ENCODE measurements at regions of chr7 and their contacts with region 1.

Region 1: DNA sequence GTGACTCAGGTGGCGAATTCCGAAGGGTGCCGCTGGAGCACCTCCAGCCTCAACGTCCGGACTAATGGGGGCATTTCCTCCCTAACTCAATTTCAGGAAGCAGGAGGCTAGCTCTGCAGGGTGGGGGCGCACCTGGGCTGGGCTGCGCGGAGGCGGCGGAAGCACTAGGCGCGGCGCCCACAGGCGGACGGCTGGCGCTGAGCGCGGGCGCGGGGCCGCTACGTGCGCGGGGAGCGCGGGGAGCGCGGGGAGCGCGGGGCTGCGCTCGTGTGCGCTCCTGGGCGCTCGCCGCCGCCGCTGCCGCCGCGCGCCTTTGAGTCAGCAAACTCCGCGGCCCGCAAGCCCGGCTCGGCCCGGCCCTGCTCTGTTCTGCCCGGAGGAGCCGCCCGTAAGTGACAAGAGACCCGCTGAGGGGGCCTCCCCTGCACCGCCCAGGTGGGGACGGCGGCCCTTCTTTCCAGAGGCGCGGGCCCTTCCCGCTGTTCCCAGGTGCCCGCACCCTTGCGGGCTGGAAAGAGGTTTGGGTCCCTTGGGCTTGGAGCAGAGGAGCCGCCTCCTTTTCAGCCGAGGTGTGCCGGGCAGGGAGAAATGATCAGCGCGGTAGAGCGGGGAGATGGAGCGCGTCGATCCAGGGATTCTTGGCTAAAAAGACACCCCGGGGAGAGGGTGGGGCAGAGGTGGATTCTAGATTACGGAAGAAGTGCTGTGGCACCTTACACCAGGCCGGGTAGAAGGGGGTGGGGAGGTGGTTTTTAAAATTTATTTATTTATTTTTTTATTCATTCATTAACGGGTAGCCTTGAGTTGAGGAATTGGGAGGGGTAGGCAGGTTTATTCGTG is at the start of gene SNX10:
- DNase-seq: peak; percentile 76
- ATAC-seq: peak; percentile 77
- H3K4me3 Mint-ChIP-seq: peak within 1 kb of the TSS; percentile 92
- H3K27ac Mint-ChIP-seq: peak within 1 kb of the TSS; percentile 95
- H3K4me1 Mint-ChIP-seq: peaks cover 51% of the 10 kb centered on the region
- H3K27me3 Mint-ChIP-seq: no peaks in the 10 kb centered on the region
- CTCF ChIP-seq: no peak
- total RNA-seq, gene SNX10: 28.9 and 32.3 TPM in 2 replicates

Region 2: GRCh38 chr7:25707768-25708620 is 583.9 kb before region 1 on chr7:
- CTCF ChIA-PET with region 1: no interaction called
- POLR2A ChIA-PET with region 1: no interaction called
- intact Hi-C with region 1: no loop called
- DNase-seq: no peak
- ATAC-seq: no peak
- H3K4me3 Mint-ChIP-seq: no peak overlapping the region
- H3K27ac Mint-ChIP-seq: no peak overlapping the region
- H3K4me1 Mint-ChIP-seq: no peaks in the 10 kb centered on the region
- H3K27me3 Mint-ChIP-seq: peaks cover 15% of the 10 kb centered on the region
- CTCF ChIP-seq: no peak

Region 3: DNA sequence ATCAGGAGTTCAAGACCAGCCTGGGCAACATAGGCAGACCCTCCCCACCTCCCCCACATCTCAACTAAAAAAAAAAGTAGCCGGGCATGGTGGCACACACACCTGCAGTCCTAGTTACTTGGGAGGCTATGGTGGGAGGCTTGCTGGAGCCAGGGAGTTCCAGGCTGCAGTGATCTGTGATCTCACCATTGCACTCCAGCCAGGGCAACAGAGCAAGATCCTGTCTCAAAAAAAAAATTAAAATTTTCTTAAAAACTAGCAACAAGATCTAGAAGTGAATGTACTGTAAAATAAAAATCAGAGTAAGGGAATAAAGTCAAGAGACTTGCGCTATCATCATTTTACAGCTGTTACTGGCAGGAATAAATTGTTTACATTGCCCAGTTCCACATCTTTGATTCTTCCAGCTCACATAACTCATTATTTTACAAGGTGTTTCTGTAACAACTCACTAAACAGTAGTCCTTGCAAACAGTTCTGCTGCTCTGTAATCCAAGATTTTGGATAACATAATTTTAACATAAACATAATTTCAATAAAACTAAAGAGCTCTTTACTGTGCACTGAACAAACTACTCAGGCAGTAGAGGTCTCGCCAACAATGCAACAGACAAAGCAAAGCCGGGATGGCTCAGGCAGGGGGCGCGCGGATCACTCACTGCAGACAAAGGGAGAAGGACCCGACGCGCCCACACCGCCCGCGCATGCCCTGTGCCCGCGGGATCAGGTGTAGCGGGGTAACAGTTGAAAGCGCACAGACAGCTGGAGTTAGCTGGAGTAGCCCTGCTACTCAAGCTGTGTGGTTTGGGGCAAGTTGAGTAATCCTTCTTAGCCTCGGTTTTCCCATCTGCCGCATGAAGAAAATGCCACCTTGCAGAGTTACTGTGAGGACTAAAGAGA is 213.2 kb before region 1 on chr7:
- CTCF ChIA-PET with region 1: interaction called, 4 read pairs
- POLR2A ChIA-PET with region 1: interaction called, 3 read pairs
- intact Hi-C with region 1: loop called (anchors 5 kb)
- DNase-seq: peak; percentile 73
- ATAC-seq: peak; percentile 100
- H3K4me3 Mint-ChIP-seq: no peak overlapping the region
- H3K27ac Mint-ChIP-seq: no peak overlapping the region
- H3K4me1 Mint-ChIP-seq: peaks cover 7% of the 10 kb centered on the region
- H3K27me3 Mint-ChIP-seq: peaks cover 33% of the 10 kb centered on the region
- CTCF ChIP-seq: no peak

Region 4: GRCh38 chr7:26151953-26152781 is 139.8 kb before region 1 on chr7 and contains the start of gene NFE2L3:
- CTCF ChIA-PET with region 1: interaction called, 3 read pairs
- POLR2A ChIA-PET with region 1: interaction called, 3 read pairs
- intact Hi-C with region 1: loop called (anchors 5 kb)
- DNase-seq: peak; percentile 82
- ATAC-seq: peak; percentile 90
- H3K4me3 Mint-ChIP-seq: peak within 1 kb of the TSS; percentile 94
- H3K27ac Mint-ChIP-seq: peak within 1 kb of the TSS; percentile 86
- H3K4me1 Mint-ChIP-seq: peaks cover 48% of the 10 kb centered on the region
- H3K27me3 Mint-ChIP-seq: no peaks in the 10 kb centered on the region
- CTCF ChIP-seq: no peak
- total RNA-seq, gene NFE2L3: 2.7 and 3.0 TPM in 2 replicates

Region 5: GRCh38 chr7:26305463-26306273 is 13.7 kb after region 1 on chr7:
- CTCF ChIA-PET with region 1: interaction called, 6 read pairs
- POLR2A ChIA-PET with region 1: interaction called, 26 read pairs
- intact Hi-C with region 1: loop called (anchors 1 kb)
- DNase-seq: no peak
- ATAC-seq: peak; percentile 52
- H3K4me3 Mint-ChIP-seq: peak overlapping the region; percentile 55
- H3K27ac Mint-ChIP-seq: peak overlapping the region; percentile 91
- H3K4me1 Mint-ChIP-seq: peaks cover 70% of the 10 kb centered on the region
- H3K27me3 Mint-ChIP-seq: no peaks in the 10 kb centered on the region
- CTCF ChIP-seq: no peak

Region 6: DNA sequence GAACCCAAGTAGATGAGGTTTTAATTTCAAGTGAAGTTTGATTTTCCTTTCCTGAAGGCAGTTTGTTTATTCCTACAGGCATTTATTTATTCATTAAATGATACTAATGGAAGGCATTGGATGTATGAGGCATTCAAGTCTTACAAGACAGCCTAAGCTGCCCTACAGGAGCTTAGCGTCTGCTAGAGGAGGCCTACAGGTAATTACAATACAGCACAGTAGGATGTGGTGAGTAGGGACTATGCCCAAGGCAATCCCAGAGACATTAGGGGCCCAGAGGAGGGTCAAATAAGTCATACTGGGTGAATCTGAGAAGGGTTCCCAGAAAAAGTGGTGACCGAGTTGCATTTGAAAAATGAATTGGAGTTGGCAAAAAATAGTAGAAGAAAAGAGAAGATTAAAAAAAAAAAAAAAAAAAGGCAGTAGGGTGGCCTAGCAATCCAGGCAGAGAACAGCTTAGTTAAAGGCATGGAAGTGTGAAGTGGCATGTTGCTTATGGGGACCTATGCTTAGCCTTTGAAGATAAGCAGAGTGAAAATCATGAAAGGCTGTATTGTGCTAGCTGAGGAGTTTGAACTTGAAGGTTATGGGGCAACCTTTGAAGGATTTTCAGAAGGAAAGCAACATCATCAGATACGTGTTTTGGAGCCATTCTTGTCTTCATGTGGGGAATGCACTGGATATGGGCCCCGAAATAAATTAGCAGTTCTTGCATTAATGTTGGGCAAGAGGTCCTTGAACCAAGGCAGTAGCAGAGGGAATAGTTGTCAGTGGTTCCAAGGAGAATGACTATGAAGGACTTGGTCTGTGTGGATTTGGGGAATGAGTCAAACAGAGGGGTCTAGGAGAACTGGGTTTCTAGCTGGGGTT is 65.2 kb after region 1 on chr7:
- CTCF ChIA-PET with region 1: interaction called, 57 read pairs
- POLR2A ChIA-PET with region 1: interaction called, 10 read pairs
- intact Hi-C with region 1: no loop called
- DNase-seq: no peak
- ATAC-seq: no peak
- H3K4me3 Mint-ChIP-seq: no peak overlapping the region
- H3K27ac Mint-ChIP-seq: peak overlapping the region; percentile 46
- H3K4me1 Mint-ChIP-seq: peaks cover 48% of the 10 kb centered on the region
- H3K27me3 Mint-ChIP-seq: no peaks in the 10 kb centered on the region
- CTCF ChIP-seq: no peak